Head of caudate nucleus (tissue), 42 donors: ENCODE measurements at regions of chr2 and their contacts with region 1.

Region 1: DNA sequence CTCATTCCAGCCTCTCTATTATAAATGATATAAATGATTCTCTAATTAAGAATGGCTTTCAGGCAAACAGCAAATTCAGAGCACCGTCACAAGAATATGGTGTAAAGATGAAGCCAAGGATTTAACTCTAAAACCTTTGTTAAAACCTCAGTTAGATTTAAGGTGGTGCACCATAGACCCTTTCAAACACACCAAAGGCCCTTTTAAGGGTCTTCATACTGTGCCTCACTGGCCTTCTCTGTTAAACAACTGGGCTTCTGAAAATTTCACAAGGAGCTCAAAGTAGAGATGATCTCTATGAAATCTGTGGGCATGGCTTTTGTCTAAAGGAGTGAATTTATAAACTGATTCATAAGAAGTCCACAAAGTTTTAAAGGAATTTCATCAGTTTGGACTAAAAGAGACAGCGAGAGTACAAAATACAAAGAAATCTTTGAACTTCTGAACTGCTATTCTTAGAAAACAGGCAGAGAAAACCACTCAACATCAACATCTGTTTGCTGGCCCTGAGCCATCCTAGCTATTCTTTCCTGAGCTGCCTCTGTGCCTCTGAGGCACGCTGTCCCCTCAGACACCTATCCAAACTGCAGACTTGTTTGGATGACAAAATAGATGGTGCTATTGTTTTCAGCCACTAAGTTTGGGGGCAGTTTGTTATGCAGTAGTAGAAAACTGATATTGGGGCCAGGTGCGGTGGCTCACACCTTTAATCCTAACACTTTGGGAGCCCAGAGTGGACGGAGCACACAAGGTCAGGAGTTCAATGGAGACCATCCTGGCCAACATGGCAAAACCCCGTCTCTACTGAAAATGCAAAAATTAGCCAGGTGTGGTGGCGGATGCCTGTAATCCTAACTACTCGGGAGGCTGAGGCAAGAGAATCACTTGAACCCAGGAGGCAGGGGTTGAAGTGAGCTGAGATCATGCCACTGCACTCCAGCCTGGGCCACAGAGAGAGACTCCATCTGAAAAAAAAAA is 72.9 kb upstream of the MYCN start:
- DNase-seq: no peak

Region 2: DNA sequence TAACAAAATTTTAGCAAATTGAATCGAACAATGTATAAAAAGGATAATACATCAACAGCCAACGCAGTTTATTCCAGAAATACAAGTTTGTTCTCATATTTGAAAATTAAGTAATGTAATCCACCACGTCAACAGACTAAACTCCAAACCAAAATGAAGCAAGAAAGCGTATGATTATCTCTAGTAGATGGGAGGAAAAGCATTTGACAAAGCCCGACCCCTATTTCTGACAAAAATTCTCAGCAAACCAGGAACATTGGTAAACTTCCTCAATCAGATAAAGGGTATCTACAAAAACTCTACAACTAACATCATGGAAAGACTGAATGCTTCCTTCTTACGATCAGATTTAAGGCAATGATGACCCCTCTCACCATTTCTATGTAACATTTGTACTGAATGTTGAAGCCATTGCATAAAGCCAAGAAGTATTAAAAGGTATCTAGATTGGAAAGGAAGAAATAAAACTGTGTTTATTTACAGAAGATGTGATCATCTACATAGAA is 38.6 kb after region 1 on chr2:
- intact Hi-C with region 1: loop called (anchors 2 kb)
- DNase-seq: no peak

Region 3: GRCh38 chr2:16413285-16413684 is 545.8 kb after region 1 on chr2:
- intact Hi-C with region 1: no loop called
- DNase-seq: no peak